CD8-positive, alpha-beta memory T cell (primary cell): ENCODE measurements at regions of chr9 and their contacts with region 1.

Region 1: GRCh38 chr9:32968101-32969011 is 33.1 kb downstream of the APTX start:
- DNase-seq: peak; percentile 35 to 67 (median 40)
- H3K4me3 ChIP-seq: no peak overlapping the region
- H3K4me3 Mint-ChIP-seq: no peak overlapping the region
- H3K27ac ChIP-seq: no peak overlapping the region
- H3K27ac Mint-ChIP-seq: peak overlapping the region in 1 of 8 donors; percentile 38
- H3K4me1 ChIP-seq: no peaks in the 10 kb centered on the region
- H3K4me1 Mint-ChIP-seq: peaks cover 0 to 3% (median 2%) of the 10 kb centered on the region in 3 donors
- H3K27me3 ChIP-seq: no peaks in the 10 kb centered on the region
- H3K27me3 Mint-ChIP-seq: no peaks in the 10 kb centered on the region

Region 2: DNA sequence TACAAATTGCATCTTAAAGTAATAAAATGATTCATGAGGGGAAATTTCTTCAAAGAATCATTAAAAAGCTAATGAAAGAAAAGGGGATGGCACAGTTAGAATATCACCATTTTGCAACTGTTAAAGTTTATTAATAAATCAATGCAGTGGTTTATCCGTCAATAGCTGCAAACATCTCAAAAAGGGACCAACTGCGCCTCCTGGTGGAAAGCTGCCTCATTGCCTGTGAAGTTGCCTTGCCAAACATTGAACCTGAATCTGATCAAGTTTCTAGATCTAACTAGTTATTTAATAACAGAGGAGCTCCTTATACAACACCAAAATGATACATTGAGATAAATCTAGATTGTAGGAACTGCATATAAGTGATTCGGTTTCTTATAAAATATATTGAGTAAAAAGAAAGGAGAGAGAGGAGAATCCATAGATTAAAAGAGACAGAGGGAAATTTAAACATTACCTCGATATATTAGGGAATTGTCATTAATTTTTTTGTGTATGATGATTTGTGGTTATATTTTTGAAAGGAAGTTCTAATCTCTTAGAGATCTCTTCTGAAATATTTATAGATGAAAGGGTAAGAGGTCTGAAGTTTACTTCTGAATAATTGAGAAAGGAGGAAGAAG is 388.5 kb before region 1 on chr9:
- CTCF ChIA-PET with region 1: interaction called, 10 read pairs
- POLR2A ChIA-PET with region 1: no interaction called
- DNase-seq: peak; percentile 61 to 84 (median 74)
- H3K4me3 ChIP-seq: no peak overlapping the region
- H3K4me3 Mint-ChIP-seq: no peak overlapping the region
- H3K27ac ChIP-seq: no peak overlapping the region
- H3K27ac Mint-ChIP-seq: peak overlapping the region in 1 of 8 donors; percentile 25
- H3K4me1 ChIP-seq: no peaks in the 10 kb centered on the region
- H3K4me1 Mint-ChIP-seq: peaks cover 0 to 2% (median 0%) of the 10 kb centered on the region in 3 donors
- H3K27me3 ChIP-seq: peaks cover 3% of the 10 kb centered on the region
- H3K27me3 Mint-ChIP-seq: peaks cover 9 to 22% of the 10 kb centered on the region in 2 donors